ENCODE measurements at regions of chr6 and their contacts with region 1.

Region 1: GRCh38 chr6:11711003-11711983 is 67.3 kb downstream of the ADTRP start:
- DNase-seq: peak; percentile 86
- ATAC-seq: peak; percentile 57
- H3K4me3 Mint-ChIP-seq: peak overlapping the region; percentile 75
- H3K27ac Mint-ChIP-seq: peak overlapping the region; percentile 100
- H3K4me1 Mint-ChIP-seq: peaks cover 80% of the 10 kb centered on the region
- H3K27me3 Mint-ChIP-seq: no peaks in the 10 kb centered on the region

Region 2: GRCh38 chr6:11064836-11065235 is 646.5 kb before region 1 on chr6:
- CTCF ChIA-PET with region 1: no interaction called
- POLR2A ChIA-PET with region 1: no interaction called
- intact Hi-C with region 1: no loop called
- DNase-seq: no peak
- ATAC-seq: no peak
- H3K4me3 Mint-ChIP-seq: no peak overlapping the region
- H3K27ac Mint-ChIP-seq: no peak overlapping the region
- H3K4me1 Mint-ChIP-seq: no peaks in the 10 kb centered on the region
- H3K27me3 Mint-ChIP-seq: no peaks in the 10 kb centered on the region

Region 3: DNA sequence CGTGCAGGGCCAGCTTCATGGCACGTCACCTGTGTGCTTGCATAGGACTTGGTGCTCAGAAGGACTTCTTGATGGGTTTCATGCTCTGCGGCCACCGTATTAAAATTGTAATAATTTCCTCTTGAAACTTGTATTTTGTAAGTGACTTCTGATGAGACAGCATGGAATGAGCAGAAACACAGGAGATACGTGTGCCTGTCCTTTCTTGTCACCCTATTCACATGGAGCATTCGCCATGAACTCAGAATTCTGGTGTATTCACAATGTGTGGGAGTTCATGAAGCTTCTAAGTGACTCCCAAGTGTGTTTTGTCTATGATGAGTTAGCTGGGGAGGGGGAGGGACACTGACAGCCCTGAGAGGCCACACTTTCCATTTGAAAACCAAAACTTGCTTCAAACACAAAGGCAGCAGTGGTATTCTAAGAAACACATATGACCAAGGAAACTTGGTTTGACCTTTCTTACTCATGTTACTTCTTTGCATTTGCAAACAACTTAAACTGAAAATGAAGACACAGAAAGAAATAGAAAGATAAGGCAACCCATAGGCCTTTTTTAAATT is 386.8 kb before region 1 on chr6:
- CTCF ChIA-PET with region 1: no interaction called
- POLR2A ChIA-PET with region 1: no interaction called
- intact Hi-C with region 1: loop called in 1 of 2 experiments (anchors 10 kb)
- DNase-seq: peak; percentile 77
- ATAC-seq: peak; percentile 93
- H3K4me3 Mint-ChIP-seq: peak overlapping the region; percentile 42
- H3K27ac Mint-ChIP-seq: peak overlapping the region; percentile 86
- H3K4me1 Mint-ChIP-seq: peaks cover 68% of the 10 kb centered on the region
- H3K27me3 Mint-ChIP-seq: no peaks in the 10 kb centered on the region

Region 4: GRCh38 chr6:11732036-11732631 is 20.8 kb after region 1 on chr6:
- CTCF ChIA-PET with region 1: interaction called, 35 read pairs
- POLR2A ChIA-PET with region 1: interaction called, 60 read pairs
- intact Hi-C with region 1: loop called (anchors 1 kb)
- DNase-seq: peak; percentile 84
- ATAC-seq: peak; percentile 58
- H3K4me3 Mint-ChIP-seq: peak overlapping the region; percentile 22
- H3K27ac Mint-ChIP-seq: peak overlapping the region; percentile 90
- H3K4me1 Mint-ChIP-seq: peaks cover 62% of the 10 kb centered on the region
- H3K27me3 Mint-ChIP-seq: peaks cover 2% of the 10 kb centered on the region

Region 5: GRCh38 chr6:11772109-11772825 is 61.0 kb after region 1 on chr6:
- CTCF ChIA-PET with region 1: interaction called, 3 read pairs
- POLR2A ChIA-PET with region 1: interaction called, 13 read pairs
- intact Hi-C with region 1: loop called (anchors 1 to 5 kb)
- DNase-seq: peak; percentile 35
- ATAC-seq: peak; percentile 70
- H3K4me3 Mint-ChIP-seq: no peak overlapping the region
- H3K27ac Mint-ChIP-seq: peak overlapping the region; percentile 37
- H3K4me1 Mint-ChIP-seq: peaks cover 27% of the 10 kb centered on the region
- H3K27me3 Mint-ChIP-seq: no peaks in the 10 kb centered on the region

Region 6: GRCh38 chr6:11824986-11825385 is 113.7 kb after region 1 on chr6:
- CTCF ChIA-PET with region 1: no interaction called
- POLR2A ChIA-PET with region 1: interaction called, 6 read pairs
- intact Hi-C with region 1: loop called (anchors 1 to 5 kb)
- DNase-seq: peak; percentile 62
- ATAC-seq: peak; percentile 92
- H3K4me3 Mint-ChIP-seq: no peak overlapping the region
- H3K27ac Mint-ChIP-seq: peak overlapping the region; percentile 83
- H3K4me1 Mint-ChIP-seq: peaks cover 24% of the 10 kb centered on the region
- H3K27me3 Mint-ChIP-seq: no peaks in the 10 kb centered on the region

Region 7: DNA sequence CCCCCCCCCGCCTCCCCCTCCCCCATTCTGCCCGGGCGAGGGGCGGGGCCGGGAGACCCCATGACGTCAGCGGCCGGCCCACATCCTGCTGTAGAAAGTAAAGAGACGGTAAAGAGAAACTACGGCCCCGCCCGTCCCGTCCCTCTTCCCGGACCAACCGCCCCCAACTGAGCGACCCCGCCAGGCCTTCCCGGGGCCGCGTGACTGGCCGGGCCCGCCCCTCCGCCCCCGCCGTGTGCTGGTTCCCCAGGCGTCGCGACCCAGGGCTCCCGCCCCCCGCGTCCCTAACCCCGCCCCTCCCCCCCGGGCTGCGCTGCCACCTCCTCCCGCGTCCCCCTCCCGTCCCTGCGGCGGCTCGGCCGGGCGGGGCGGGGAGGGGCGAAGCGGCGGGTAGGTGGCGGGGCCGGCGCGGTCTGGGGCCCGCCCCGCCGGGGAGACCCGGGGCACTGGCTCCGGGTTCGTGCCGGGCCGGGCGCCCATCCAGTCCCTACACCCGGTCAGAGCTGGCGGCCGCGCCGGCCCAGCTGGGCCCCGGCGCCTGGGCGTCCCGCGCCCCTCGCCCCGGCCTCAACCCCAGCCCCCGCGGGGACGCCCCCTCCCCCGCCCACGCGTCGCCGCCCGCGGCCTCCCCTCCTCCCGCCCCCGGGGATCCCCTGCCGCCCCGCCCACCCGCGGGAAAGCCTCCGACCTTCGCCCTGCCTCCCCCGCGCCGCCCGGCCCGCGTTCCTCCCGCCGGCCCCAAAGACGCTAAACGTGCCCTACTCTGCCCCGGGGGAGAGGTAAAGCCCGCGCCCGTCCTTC is 300.2 kb after region 1 on chr6:
- CTCF ChIA-PET with region 1: interaction called, 4 read pairs
- POLR2A ChIA-PET with region 1: interaction called, 11 read pairs
- intact Hi-C with region 1: loop called (anchors 1 to 2 kb)
- DNase-seq: peak; percentile 99
- ATAC-seq: peak; percentile 77
- H3K4me3 Mint-ChIP-seq: peak overlapping the region; percentile 96
- H3K27ac Mint-ChIP-seq: peak overlapping the region; percentile 98
- H3K4me1 Mint-ChIP-seq: peaks cover 39% of the 10 kb centered on the region
- H3K27me3 Mint-ChIP-seq: no peaks in the 10 kb centered on the region

Region 8: GRCh38 chr6:12103158-12103557 is 391.9 kb after region 1 on chr6:
- CTCF ChIA-PET with region 1: no interaction called
- POLR2A ChIA-PET with region 1: no interaction called
- intact Hi-C with region 1: no loop called
- DNase-seq: no peak
- ATAC-seq: no peak
- H3K4me3 Mint-ChIP-seq: no peak overlapping the region
- H3K27ac Mint-ChIP-seq: no peak overlapping the region
- H3K4me1 Mint-ChIP-seq: peaks cover 34% of the 10 kb centered on the region
- H3K27me3 Mint-ChIP-seq: no peaks in the 10 kb centered on the region

Region 9: GRCh38 chr6:12119085-12119588 is 407.8 kb after region 1 on chr6:
- CTCF ChIA-PET with region 1: no interaction called
- POLR2A ChIA-PET with region 1: no interaction called
- intact Hi-C with region 1: loop called in 1 of 2 experiments (anchors 5 kb)
- DNase-seq: peak; percentile 60
- ATAC-seq: peak; percentile 88
- H3K4me3 Mint-ChIP-seq: no peak overlapping the region
- H3K27ac Mint-ChIP-seq: peak overlapping the region; percentile 38
- H3K4me1 Mint-ChIP-seq: peaks cover 58% of the 10 kb centered on the region
- H3K27me3 Mint-ChIP-seq: no peaks in the 10 kb centered on the region

Measured in activated CD4-positive, alpha-beta T cell treated with anti-CD3 and anti-CD28 coated beads for 36 hours (primary cell).